ENCODE measurements at regions of chrX and their contacts with region 1.

Region 1: GRCh38 chrX:15854712-15855567 is at the start of gene AP1S2:
- DNase-seq: peak; percentile 75 to 99 (median 96)

Region 2: GRCh38 chrX:15674841-15675489 is 180.0 kb before region 1 on chrX:
- intact Hi-C with region 1: loop called (anchors 5 kb)
- DNase-seq: peak; percentile 73 to 96 (median 91)

Region 3: GRCh38 chrX:15789979-15790768 is 64.8 kb before region 1 on chrX and contains the start of gene ZRSR2:
- intact Hi-C with region 1: loop called (anchors 10 kb)
- DNase-seq: peak; percentile 75 to 96 (median 90)

Region 4: GRCh38 chrX:15977644-15978043 is 122.7 kb after region 1 on chrX:
- intact Hi-C with region 1: no loop called
- DNase-seq: no peak

Region 5: GRCh38 chrX:15988661-15989603 is 134.0 kb after region 1 on chrX:
- intact Hi-C with region 1: no loop called
- DNase-seq: peak in 5 of 42 donors; percentile 2 to 36 (median 9)

Region 6: DNA sequence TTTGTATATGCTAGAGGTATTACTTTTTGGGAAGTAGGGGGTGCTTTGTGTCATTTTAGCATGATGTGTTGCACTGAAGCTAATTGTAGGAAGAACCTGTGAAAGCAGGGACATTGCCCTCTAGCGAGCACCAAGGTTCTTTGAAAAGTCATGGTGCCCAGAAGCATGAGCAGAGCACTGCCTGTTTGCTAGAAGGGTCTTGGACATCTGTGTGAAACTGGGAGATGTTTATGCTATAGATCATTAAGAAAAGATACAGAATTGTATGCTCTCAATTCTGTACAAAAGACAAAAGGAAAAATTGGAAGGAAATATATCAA is 283.1 kb after region 1 on chrX:
- intact Hi-C with region 1: no loop called
- DNase-seq: no peak

Region 7: GRCh38 chrX:16284842-16285241 is 429.9 kb after region 1 on chrX:
- intact Hi-C with region 1: no loop called
- DNase-seq: no peak

Measured in head of caudate nucleus (tissue), 42 donors.